ENCODE measurements at regions of chr15 and their contacts with region 1.

Region 1: DNA sequence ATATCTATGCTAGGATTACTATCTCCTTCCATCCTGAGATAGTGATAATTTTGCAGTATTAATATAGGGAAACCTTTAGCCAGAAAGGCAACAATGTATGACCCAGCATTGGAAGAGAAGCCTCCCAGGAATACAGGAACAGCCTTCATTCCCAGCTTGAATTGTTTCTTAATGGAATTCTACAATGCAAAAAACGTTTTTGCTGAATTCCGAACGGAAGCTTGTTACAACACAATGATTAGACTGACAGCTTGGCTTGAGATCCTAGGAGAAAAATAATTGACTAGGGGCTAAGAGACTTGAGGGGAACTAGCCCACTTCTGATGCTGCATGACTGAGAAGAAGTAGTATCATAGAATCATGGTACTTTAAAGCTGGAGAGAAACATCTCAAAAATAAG is 140.2 kb downstream of the RSL24D1 start:
- DNase-seq: no peak
- ATAC-seq: no peak

Region 2: GRCh38 chr15:54990793-54991192 is 65.7 kb before region 1 on chr15:
- intact Hi-C with region 1: loop called (anchors 10 kb)
- DNase-seq: no peak
- ATAC-seq: no peak

Region 3: GRCh38 chr15:55387027-55387426 is 330.5 kb after region 1 on chr15:
- intact Hi-C with region 1: no loop called
- DNase-seq: no peak
- ATAC-seq: no peak